ENCODE measurements at regions of chr1 and their contacts with region 1.

Region 1: GRCh38 chr1:244296447-244296846 is 155.3 kb downstream of the ADSS2 start:
- DNase-seq: no peak

Region 2: DNA sequence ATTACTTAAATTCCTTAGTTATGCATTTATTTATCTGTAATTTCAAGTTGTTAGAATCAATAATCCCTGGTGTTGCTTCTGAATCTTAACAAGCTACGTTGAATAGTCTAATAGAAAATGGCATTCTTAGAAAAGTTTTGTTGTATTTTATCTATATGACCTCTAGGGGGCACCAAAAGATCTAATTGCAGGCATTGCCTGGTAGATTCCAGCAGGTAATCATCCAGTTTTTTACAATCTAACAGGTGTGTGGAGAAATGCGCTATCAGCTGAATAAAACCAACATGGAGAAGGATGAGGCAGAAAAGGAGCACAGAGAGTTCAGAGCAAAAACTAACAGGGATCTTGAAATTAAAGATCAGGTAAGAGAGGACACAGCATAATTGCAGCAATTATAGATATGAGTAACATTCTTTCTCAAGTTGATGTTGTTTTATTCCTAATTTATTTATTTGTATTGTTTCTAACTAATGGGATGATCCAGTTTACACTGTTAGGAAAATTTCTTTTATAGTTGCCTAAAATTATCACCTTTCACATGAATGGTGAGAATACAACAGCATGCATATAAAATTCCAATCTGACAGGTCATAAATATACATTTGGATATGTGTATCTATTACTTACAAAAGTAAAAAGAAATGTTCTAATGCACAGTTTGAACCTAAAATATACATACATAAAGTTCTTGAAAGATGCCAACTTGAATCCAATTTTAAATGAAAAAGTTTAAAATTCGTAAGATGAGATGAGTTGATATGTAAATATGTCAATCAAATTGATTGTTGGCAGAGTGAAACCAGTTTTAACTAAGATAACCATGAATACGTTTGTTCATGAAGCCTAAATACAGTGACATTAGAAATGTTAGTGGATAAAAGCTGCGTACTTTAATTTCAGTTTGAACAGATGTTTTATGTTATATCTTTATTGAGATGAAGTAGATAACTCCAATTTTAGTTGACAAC is 952.2 kb before region 1 on chr1:
- intact Hi-C with region 1: loop called in 1 of 2 experiments (anchors 10 kb)
- DNase-seq: no peak